CD8-positive, alpha-beta T cell (primary cell): ENCODE measurements at regions of chr12 and their contacts with region 1.

Region 1: GRCh38 chr12:4172999-4173398 is 100.6 kb upstream of the CCND2 start:
- DNase-seq: peak in 1 of 9 experiments; percentile 23
- ATAC-seq: no peak
- H3K4me3 ChIP-seq: no peak overlapping the region
- H3K4me3 Mint-ChIP-seq: no peak overlapping the region
- H3K27ac ChIP-seq: no peak overlapping the region
- H3K27ac Mint-ChIP-seq: no peak overlapping the region
- H3K4me1 ChIP-seq: no peaks in the 10 kb centered on the region
- H3K4me1 Mint-ChIP-seq: peaks cover 2% of the 10 kb centered on the region
- H3K27me3 ChIP-seq: peaks cover 0 to 2% of the 10 kb centered on the region in 2 experiments
- H3K27me3 Mint-ChIP-seq: no peaks in the 10 kb centered on the region
- CTCF ChIP-seq: no peak

Region 2: DNA sequence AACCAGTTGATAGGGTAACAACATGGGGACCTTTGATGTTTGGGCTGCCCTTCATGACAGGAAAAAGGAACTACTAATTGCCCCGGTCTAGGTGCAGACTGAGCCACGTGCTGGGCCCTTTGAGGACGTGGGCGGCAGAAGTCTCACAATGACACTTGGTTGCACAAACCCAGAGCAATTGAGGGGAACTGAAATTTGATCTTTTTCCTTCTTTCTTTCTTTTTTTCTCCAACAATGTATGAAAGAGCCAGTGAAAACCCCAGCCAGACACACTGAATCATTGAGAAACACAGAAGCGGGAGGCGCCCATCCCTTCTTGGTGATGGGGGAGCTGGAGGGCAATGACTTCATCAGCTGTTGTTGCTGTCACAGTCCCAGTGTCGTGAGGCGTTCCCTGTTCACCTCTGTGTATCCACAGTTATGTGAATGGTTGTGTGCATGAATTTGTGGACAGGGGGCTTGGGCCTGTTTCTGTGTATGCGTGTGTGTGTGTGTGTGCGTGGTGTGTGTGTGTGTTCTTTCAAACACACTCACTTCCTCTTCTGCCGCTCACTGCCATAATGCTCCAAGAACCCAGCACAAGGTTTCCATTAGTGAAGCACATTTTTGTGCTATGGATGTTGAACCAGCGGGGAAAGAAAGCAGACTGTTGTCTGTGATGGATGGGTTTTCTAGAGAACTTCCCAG is 36.9 kb before region 1 on chr12:
- CTCF ChIA-PET with region 1: interaction called, 3 read pairs
- POLR2A ChIA-PET with region 1: no interaction called
- intact Hi-C with region 1: loop called in 1 of 2 experiments (anchors 5 kb)
- DNase-seq: peak in 2 of 9 experiments; percentile 31 to 42
- ATAC-seq: no peak
- H3K4me3 ChIP-seq: no peak overlapping the region
- H3K4me3 Mint-ChIP-seq: no peak overlapping the region
- H3K27ac ChIP-seq: no peak overlapping the region
- H3K27ac Mint-ChIP-seq: no peak overlapping the region
- H3K4me1 ChIP-seq: peaks cover 3% of the 10 kb centered on the region
- H3K4me1 Mint-ChIP-seq: peaks cover 13% of the 10 kb centered on the region
- H3K27me3 ChIP-seq: no peaks in the 10 kb centered on the region
- H3K27me3 Mint-ChIP-seq: no peaks in the 10 kb centered on the region
- CTCF ChIP-seq: no peak